ENCODE measurements at regions of chr1 and their contacts with region 1.

Region 1: GRCh38 chr1:201511941-201512539 is 5.1 kb upstream of the CSRP1 start:
- DNase-seq: peak; percentile 39
- H3K4me3 ChIP-seq: no peak overlapping the region
- H3K27ac ChIP-seq: peak overlapping the region; percentile 15
- H3K4me1 ChIP-seq: peaks cover 20% of the 10 kb centered on the region
- H3K27me3 ChIP-seq: no peaks in the 10 kb centered on the region
- CTCF ChIP-seq: no peak
- POLR2A ChIP-seq: no peak

Region 2: DNA sequence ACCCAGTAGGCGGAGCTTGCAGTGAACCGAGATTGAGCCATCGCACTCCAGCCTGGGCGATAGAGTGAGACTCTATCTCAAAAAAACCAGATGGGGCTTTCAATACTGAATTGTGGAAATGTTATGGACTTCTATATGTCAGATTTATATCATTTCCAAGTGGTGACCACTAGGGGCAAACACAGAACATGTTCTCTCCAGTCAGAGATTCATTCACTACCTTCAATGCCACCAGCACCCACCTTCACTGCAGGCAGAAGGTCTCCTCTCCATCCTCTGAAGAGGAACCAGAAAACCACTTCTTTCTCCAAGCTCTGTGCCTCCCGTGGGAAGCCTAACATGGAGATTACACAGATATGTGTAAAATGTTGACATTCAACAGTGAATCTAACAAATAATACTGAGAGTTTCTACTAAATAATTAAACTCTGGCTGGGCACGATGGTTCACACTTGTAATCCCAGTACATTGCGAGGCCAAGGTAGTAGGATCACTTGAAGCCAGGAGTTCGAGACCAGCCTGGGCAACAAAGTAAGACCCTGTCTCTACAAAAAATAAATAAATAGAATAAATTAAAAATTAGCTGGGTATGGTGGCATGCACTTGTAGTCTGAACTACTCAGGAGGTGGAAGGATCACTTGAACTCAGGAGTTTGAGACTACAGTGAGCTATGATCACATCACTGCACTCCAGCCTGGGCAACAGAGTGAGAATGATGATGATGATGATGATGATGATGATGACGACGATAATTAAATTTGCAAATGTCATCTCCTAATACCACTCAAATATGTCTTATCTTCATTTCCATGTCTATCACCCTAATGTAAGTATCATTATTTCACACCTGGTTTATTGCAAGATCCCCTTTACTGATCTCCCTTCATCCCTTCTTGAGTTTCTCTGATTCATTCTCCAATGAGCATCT is 1253.3 kb before region 1 on chr1:
- CTCF ChIA-PET with region 1: no interaction called
- POLR2A ChIA-PET with region 1: no interaction called
- dilution Hi-C with region 1: no loop called
- intact Hi-C with region 1: no loop called
- DNase-seq: peak; percentile 36
- H3K4me3 ChIP-seq: no peak overlapping the region
- H3K27ac ChIP-seq: no peak overlapping the region
- H3K4me1 ChIP-seq: no peaks in the 10 kb centered on the region
- H3K27me3 ChIP-seq: peaks cover 0 to 2% of the 10 kb centered on the region in 2 experiments
- CTCF ChIP-seq: peak; percentile 40 to 47
- POLR2A ChIP-seq: no peak

Region 3: GRCh38 chr1:201436393-201436792 is 75.6 kb before region 1 on chr1:
- CTCF ChIA-PET with region 1: interaction called, 140 read pairs
- POLR2A ChIA-PET with region 1: no interaction called
- dilution Hi-C with region 1: no loop called
- intact Hi-C with region 1: loop called (anchors 1 kb)
- DNase-seq: no peak
- H3K4me3 ChIP-seq: no peak overlapping the region
- H3K27ac ChIP-seq: no peak overlapping the region
- H3K4me1 ChIP-seq: no peaks in the 10 kb centered on the region
- H3K27me3 ChIP-seq: peaks cover 12 to 14% of the 10 kb centered on the region in 2 experiments
- CTCF ChIP-seq: no peak
- POLR2A ChIP-seq: no peak

Region 4: GRCh38 chr1:201460814-201461657 is 51.0 kb before region 1 on chr1:
- CTCF ChIA-PET with region 1: interaction called, 18 read pairs
- POLR2A ChIA-PET with region 1: no interaction called
- dilution Hi-C with region 1: no loop called
- intact Hi-C with region 1: no loop called
- DNase-seq: peak; percentile 82
- H3K4me3 ChIP-seq: no peak overlapping the region
- H3K27ac ChIP-seq: no peak overlapping the region
- H3K4me1 ChIP-seq: peaks cover 13% of the 10 kb centered on the region
- H3K27me3 ChIP-seq: no peaks in the 10 kb centered on the region
- CTCF ChIP-seq: no peak
- POLR2A ChIP-seq: peak; percentile 53

Region 5: GRCh38 chr1:201476670-201477344 is 35.2 kb before region 1 on chr1:
- CTCF ChIA-PET with region 1: interaction called, 1,317 read pairs
- POLR2A ChIA-PET with region 1: interaction called, 30 read pairs
- dilution Hi-C with region 1: loop called (anchors 5 kb)
- intact Hi-C with region 1: loop called (anchors 1 kb)
- DNase-seq: no peak
- H3K4me3 ChIP-seq: no peak overlapping the region
- H3K27ac ChIP-seq: no peak overlapping the region
- H3K4me1 ChIP-seq: peaks cover 10% of the 10 kb centered on the region
- H3K27me3 ChIP-seq: peaks cover 5 to 14% of the 10 kb centered on the region in 2 experiments
- CTCF ChIP-seq: no peak
- POLR2A ChIP-seq: no peak

Region 6: DNA sequence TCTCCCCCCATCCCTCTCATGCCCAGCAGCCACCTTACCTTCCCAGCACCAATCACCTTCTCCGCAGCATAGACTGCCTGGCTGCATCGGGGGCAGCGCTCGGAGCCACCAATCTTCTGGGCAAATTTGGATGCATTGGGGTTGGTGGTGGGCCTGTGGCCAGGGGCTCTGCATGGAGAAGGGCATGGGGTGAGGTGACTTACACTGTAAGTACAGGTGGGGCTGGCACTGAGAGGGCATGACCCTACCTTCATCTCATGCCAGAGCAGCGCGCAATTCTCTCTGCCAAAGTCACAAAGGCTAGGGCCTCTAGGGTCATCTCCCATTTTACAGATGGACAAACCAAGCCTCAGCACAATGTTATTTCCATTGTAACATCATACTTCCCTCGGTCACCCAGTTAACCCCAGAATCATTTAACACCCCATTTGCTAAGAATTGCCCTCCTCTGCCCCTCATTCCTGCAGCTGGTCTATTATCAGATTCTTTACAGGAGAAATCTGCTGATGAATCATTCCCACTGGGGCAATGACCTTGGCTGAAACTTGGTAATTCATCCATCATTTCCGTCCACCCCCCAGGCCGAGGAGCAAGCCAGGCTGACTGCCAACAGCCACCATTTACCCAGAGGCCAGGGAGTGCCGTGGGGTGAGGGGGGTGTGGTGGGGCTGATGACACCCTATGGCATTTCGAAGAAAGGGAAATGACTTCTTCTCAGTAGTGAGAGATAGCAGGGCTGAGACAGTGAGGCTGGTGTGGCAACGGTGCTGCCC is 23.0 kb before region 1 on chr1:
- CTCF ChIA-PET with region 1: interaction called, 1,317 read pairs
- POLR2A ChIA-PET with region 1: interaction called, 124 read pairs
- dilution Hi-C with region 1: no loop called
- intact Hi-C with region 1: loop called (anchors 1 kb)
- DNase-seq: peak; percentile 96
- H3K4me3 ChIP-seq: no peak overlapping the region
- H3K27ac ChIP-seq: peak overlapping the region; percentile 90
- H3K4me1 ChIP-seq: peaks cover 75% of the 10 kb centered on the region
- H3K27me3 ChIP-seq: no peaks in the 10 kb centered on the region
- CTCF ChIP-seq: no peak
- POLR2A ChIP-seq: peak; percentile 28

Region 7: GRCh38 chr1:201530741-201531531 is 18.9 kb after region 1 on chr1:
- CTCF ChIA-PET with region 1: interaction called, 31 read pairs
- POLR2A ChIA-PET with region 1: no interaction called
- dilution Hi-C with region 1: no loop called
- intact Hi-C with region 1: no loop called
- DNase-seq: peak; percentile 77
- H3K4me3 ChIP-seq: no peak overlapping the region
- H3K27ac ChIP-seq: no peak overlapping the region
- H3K4me1 ChIP-seq: peaks cover 12% of the 10 kb centered on the region
- H3K27me3 ChIP-seq: no peaks in the 10 kb centered on the region
- CTCF ChIP-seq: peak; percentile 87 to 89
- POLR2A ChIP-seq: no peak

Measured in endothelial cell of umbilical vein (primary cell).